ENCODE measurements at regions of chr13 and their contacts with region 1.

Region 1: DNA sequence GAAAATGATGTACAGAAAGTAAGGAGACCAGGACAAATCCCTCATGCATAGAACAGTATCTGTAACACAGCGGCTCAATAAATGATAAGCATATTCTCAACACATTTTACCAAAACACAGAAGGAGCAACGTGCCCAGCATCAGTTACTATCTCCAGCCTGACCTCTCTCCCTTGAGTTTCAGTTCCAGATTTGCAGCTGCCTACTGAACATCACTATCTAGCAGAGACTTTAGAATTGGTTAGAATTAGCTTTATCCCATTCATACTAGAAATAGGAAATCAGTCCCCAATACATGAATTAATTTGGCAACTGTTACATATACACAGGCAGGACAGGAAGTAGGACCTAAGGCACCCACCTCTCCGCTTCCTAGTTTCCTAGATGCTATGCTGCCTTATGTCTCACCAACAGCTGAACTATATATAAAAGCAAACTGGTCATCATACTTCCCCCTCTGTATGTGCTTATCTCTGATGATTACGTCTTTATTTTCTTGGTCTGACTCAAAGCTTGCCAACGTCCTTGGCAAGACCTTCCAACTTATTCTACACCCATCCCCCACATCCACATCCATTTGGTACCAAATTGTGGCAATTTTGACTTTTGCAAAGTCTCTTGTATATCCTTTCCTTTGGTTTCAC is 61.1 kb downstream of the SACS start:
- DNase-seq: no peak
- ATAC-seq: no peak
- H3K4me3 ChIP-seq: no peak overlapping the region
- H3K4me3 Mint-ChIP-seq: peak overlapping the region in 1 of 3 donors; percentile 2
- H3K27ac ChIP-seq: no peak overlapping the region
- H3K27ac Mint-ChIP-seq: no peak overlapping the region
- H3K4me1 ChIP-seq: peaks cover 7 to 20% of the 10 kb centered on the region in 2 experiments
- H3K4me1 Mint-ChIP-seq: peaks cover 31 to 40% (median 39%) of the 10 kb centered on the region in 3 donors
- H3K27me3 ChIP-seq: no peaks in the 10 kb centered on the region
- H3K27me3 Mint-ChIP-seq: no peaks in the 10 kb centered on the region

Region 2: GRCh38 chr13:23567906-23568460 is 195.6 kb after region 1 on chr13:
- CTCF ChIA-PET with region 1: interaction called in 1 of 2 experiments, 12 read pairs
- POLR2A ChIA-PET with region 1: no interaction called
- DNase-seq: no peak
- ATAC-seq: no peak
- H3K4me3 ChIP-seq: no peak overlapping the region
- H3K4me3 Mint-ChIP-seq: no peak overlapping the region
- H3K27ac ChIP-seq: no peak overlapping the region
- H3K27ac Mint-ChIP-seq: no peak overlapping the region
- H3K4me1 ChIP-seq: peaks cover 0 to 6% of the 10 kb centered on the region in 2 experiments
- H3K4me1 Mint-ChIP-seq: peaks cover 5 to 10% (median 6%) of the 10 kb centered on the region in 3 donors
- H3K27me3 ChIP-seq: peaks cover 2 to 14% of the 10 kb centered on the region in 2 experiments
- H3K27me3 Mint-ChIP-seq: peaks cover 44 to 57% of the 10 kb centered on the region in 2 donors

Measured in T-cell (primary cell).